Heart left ventricle (tissue), 16 donors: ENCODE measurements at regions of chr18 and their contacts with region 1.

Region 1: GRCh38 chr18:43271593-43272432 is 5.5 kb downstream of the SYT4 start:
- DNase-seq: no peak
- ATAC-seq: no peak
- H3K4me3 ChIP-seq: no peak overlapping the region
- H3K27ac ChIP-seq: no peak overlapping the region
- H3K4me1 ChIP-seq: no peaks in the 10 kb centered on the region
- H3K27me3 ChIP-seq: peaks cover 0 to 3% (median 0%) of the 10 kb centered on the region in 9 donors
- CTCF ChIP-seq: peak; percentile 66 to 87 (median 78)
- POLR2A ChIP-seq: no peak

Region 2: GRCh38 chr18:42053188-42053781 is 1218.5 kb before region 1 on chr18:
- intact Hi-C with region 1: loop called in 1 of 10 experiments (anchors 10 kb)
- DNase-seq: peak in 4 of 5 donors; percentile 29 to 41 (median 32)
- ATAC-seq: peak in 3 of 4 donors; percentile 54 to 69 (median 64)
- H3K4me3 ChIP-seq: peak overlapping the region in 1 of 12 donors; percentile 25
- H3K27ac ChIP-seq: no peak overlapping the region
- H3K4me1 ChIP-seq: peaks cover 0 to 8% (median 0%) of the 10 kb centered on the region in 12 donors
- H3K27me3 ChIP-seq: no peaks in the 10 kb centered on the region
- CTCF ChIP-seq: peak; percentile 69 to 91 (median 81)
- POLR2A ChIP-seq: no peak

Region 3: DNA sequence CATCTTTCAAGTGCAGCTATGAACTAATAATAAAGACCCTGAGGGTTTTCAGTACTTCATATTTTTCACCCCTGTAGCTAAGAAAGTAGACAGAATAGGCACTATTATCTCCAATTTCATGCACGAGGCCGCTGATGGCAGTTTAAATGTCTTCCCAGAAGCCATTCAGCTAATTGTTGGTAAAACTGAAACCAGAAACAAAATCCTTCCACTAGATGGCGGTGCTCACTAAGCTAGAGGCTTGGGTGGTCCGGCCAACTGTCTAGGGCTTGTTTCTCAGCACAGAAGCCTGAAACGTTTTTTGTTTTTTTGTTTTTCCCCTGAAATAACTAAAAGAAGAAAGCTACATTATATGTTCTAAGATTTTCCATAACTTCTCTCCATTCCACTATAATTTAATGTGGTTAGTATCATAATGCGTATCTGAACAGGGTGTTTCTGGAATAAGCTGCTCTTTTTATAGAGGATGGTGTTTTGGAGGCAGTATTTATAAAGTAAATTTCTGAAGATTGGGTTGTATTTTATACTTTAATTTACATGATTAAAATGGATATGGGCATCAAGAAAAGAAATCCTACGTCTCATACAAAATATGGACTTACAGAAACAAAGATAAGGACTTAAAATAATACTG is 1157.4 kb before region 1 on chr18:
- intact Hi-C with region 1: loop called (anchors 1 to 10 kb)
- DNase-seq: peak in 4 of 5 donors; percentile 31 to 60 (median 55)
- ATAC-seq: peak; percentile 69 to 88 (median 78)
- H3K4me3 ChIP-seq: no peak overlapping the region
- H3K27ac ChIP-seq: no peak overlapping the region
- H3K4me1 ChIP-seq: peaks cover 0 to 16% (median 2%) of the 10 kb centered on the region in 12 donors
- H3K27me3 ChIP-seq: no peaks in the 10 kb centered on the region
- CTCF ChIP-seq: peak; percentile 83 to 96 (median 89)
- POLR2A ChIP-seq: no peak

Region 4: GRCh38 chr18:42305869-42306593 is 965.8 kb before region 1 on chr18:
- intact Hi-C with region 1: loop called in 1 of 10 experiments (anchors 10 kb)
- DNase-seq: no peak
- ATAC-seq: peak in 1 of 4 donors; percentile 49
- H3K4me3 ChIP-seq: no peak overlapping the region
- H3K27ac ChIP-seq: no peak overlapping the region
- H3K4me1 ChIP-seq: peaks cover 0 to 11% (median 2%) of the 10 kb centered on the region in 12 donors
- H3K27me3 ChIP-seq: no peaks in the 10 kb centered on the region
- CTCF ChIP-seq: no peak
- POLR2A ChIP-seq: no peak

Region 5: GRCh38 chr18:43195421-43195820 is 76.4 kb before region 1 on chr18:
- intact Hi-C with region 1: no loop called
- DNase-seq: no peak
- ATAC-seq: no peak
- H3K4me3 ChIP-seq: no peak overlapping the region
- H3K27ac ChIP-seq: no peak overlapping the region
- H3K4me1 ChIP-seq: no peaks in the 10 kb centered on the region
- H3K27me3 ChIP-seq: no peaks in the 10 kb centered on the region
- CTCF ChIP-seq: no peak
- POLR2A ChIP-seq: no peak

Region 6: DNA sequence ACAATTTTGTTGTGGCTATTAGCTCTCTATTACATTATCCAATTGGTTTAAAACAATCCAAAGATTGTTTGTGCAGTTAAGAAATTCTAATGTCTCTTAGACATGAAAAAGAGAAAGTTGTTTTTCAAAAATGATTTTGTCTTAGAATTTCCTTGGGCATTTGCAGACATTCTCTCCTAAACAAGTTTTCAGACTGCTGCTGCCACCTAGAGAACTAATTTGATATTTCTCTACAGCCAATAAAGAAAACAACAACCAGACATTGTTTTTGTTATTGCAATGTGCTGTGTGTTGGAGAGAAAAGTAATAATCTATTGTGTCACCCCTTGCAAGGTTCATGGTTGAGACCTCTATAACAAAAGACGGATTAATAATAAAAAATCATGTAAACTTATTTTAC is 124.5 kb after region 1 on chr18:
- intact Hi-C with region 1: loop called in 1 of 10 experiments (anchors 10 kb)
- DNase-seq: no peak
- ATAC-seq: no peak
- H3K4me3 ChIP-seq: no peak overlapping the region
- H3K27ac ChIP-seq: no peak overlapping the region
- H3K4me1 ChIP-seq: no peaks in the 10 kb centered on the region
- H3K27me3 ChIP-seq: peaks cover 0 to 3% (median 0%) of the 10 kb centered on the region in 9 donors
- CTCF ChIP-seq: peak in 8 of 12 donors; percentile 14 to 50 (median 44)
- POLR2A ChIP-seq: no peak